ENCODE measurements at regions of chr15 and their contacts with region 1.

Region 1: GRCh38 chr15:75453703-75454470 is 2.4 kb upstream of the SIN3A start:
- DNase-seq: peak; percentile 98
- ATAC-seq: peak; percentile 54
- H3K4me3 ChIP-seq: peak overlapping the region; percentile 76
- H3K27ac ChIP-seq: peak overlapping the region; percentile 96
- H3K4me1 ChIP-seq: peaks cover 11% of the 10 kb centered on the region
- H3K27me3 ChIP-seq: no peaks in the 10 kb centered on the region
- CTCF ChIP-seq: no peak
- EP300 ChIP-seq: no peak
- POLR2A ChIP-seq: peak; percentile 89
- RAD21 ChIP-seq: no peak

Region 2: GRCh38 chr15:75023181-75023871 is 430.6 kb before region 1 on chr15 and contains the start of gene PPCDC:
- CTCF ChIA-PET with region 1: interaction called, 3 read pairs
- POLR2A ChIA-PET with region 1: no interaction called
- RAD21 ChIA-PET with region 1: interaction called, 3 read pairs
- SMC1A ChIA-PET with region 1: no interaction called
- in situ Hi-C with region 1: no loop called
- intact Hi-C with region 1: loop called (anchors 5 kb)
- DNase-seq: peak; percentile 84
- ATAC-seq: peak; percentile 99
- H3K4me3 ChIP-seq: peak within 1 kb of the TSS; percentile 86
- H3K27ac ChIP-seq: peak within 1 kb of the TSS; percentile 98
- H3K4me1 ChIP-seq: peaks cover 16% of the 10 kb centered on the region
- H3K27me3 ChIP-seq: no peaks in the 10 kb centered on the region
- CTCF ChIP-seq: no peak
- EP300 ChIP-seq: no peak
- POLR2A ChIP-seq: peak; percentile 99
- RAD21 ChIP-seq: no peak
- polyA plus RNA-seq, gene PPCDC: 92.0 to 135 TPM

Region 3: GRCh38 chr15:75249726-75250125 is 204.2 kb before region 1 on chr15:
- CTCF ChIA-PET with region 1: no interaction called
- POLR2A ChIA-PET with region 1: no interaction called
- RAD21 ChIA-PET with region 1: no interaction called
- SMC1A ChIA-PET with region 1: no interaction called
- in situ Hi-C with region 1: no loop called
- intact Hi-C with region 1: no loop called
- DNase-seq: no peak
- ATAC-seq: no peak
- H3K4me3 ChIP-seq: no peak overlapping the region
- H3K27ac ChIP-seq: no peak overlapping the region
- H3K4me1 ChIP-seq: no peaks in the 10 kb centered on the region
- H3K27me3 ChIP-seq: no peaks in the 10 kb centered on the region
- CTCF ChIP-seq: no peak
- EP300 ChIP-seq: no peak
- POLR2A ChIP-seq: no peak
- RAD21 ChIP-seq: no peak

Region 4: DNA sequence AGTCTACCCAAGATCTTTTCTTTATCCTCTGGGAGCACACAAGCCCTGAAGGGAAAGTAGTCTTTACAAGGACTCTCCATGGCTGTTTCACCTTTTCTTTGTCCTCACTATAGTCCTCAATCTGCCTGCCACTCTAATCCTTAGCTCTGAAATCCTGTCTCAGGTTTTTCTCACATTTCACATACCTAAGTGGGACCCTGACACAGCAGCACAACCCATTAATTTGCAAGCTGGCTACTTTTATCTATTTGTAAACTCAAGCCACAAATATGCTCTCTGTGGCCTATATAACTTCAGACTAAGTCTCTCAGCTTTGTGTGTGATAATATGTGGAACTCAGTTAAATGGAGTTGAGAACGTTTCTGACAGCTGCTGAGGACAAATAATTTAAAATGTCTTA is 22.2 kb before region 1 on chr15:
- CTCF ChIA-PET with region 1: interaction called, 6 read pairs
- POLR2A ChIA-PET with region 1: interaction called, 4 read pairs
- RAD21 ChIA-PET with region 1: interaction called, 10 read pairs
- SMC1A ChIA-PET with region 1: no interaction called
- in situ Hi-C with region 1: no loop called
- intact Hi-C with region 1: no loop called
- DNase-seq: no peak
- ATAC-seq: no peak
- H3K4me3 ChIP-seq: no peak overlapping the region
- H3K27ac ChIP-seq: no peak overlapping the region
- H3K4me1 ChIP-seq: no peaks in the 10 kb centered on the region
- H3K27me3 ChIP-seq: no peaks in the 10 kb centered on the region
- CTCF ChIP-seq: no peak
- EP300 ChIP-seq: no peak
- POLR2A ChIP-seq: no peak
- RAD21 ChIP-seq: no peak

Region 5: GRCh38 chr15:75578948-75579920 is 125.3 kb after region 1 on chr15 and contains the start of gene PTPN9:
- CTCF ChIA-PET with region 1: interaction called, 4 read pairs
- POLR2A ChIA-PET with region 1: interaction called, 41 read pairs
- RAD21 ChIA-PET with region 1: interaction called, 10 read pairs
- SMC1A ChIA-PET with region 1: interaction called, 5 read pairs
- in situ Hi-C with region 1: no loop called
- intact Hi-C with region 1: no loop called
- DNase-seq: no peak
- ATAC-seq: peak; percentile 84
- H3K4me3 ChIP-seq: peak within 1 kb of the TSS; percentile 86
- H3K27ac ChIP-seq: peak within 1 kb of the TSS; percentile 79
- H3K4me1 ChIP-seq: peaks cover 3% of the 10 kb centered on the region; the same call in 1 of the 2 replicates
- H3K27me3 ChIP-seq: no peaks in the 10 kb centered on the region
- CTCF ChIP-seq: peak; percentile 23 to 46 (median 33); a peak in 5 of 6 replicates
- EP300 ChIP-seq: no peak
- POLR2A ChIP-seq: peak; percentile 76
- RAD21 ChIP-seq: no peak
- polyA plus RNA-seq, gene PTPN9: 7.8 to 8.9 TPM

Region 6: GRCh38 chr15:75625542-75626347 is 171.9 kb after region 1 on chr15 and contains the start of gene SNUPN:
- CTCF ChIA-PET with region 1: interaction called, 10 read pairs
- POLR2A ChIA-PET with region 1: interaction called, 31 read pairs
- RAD21 ChIA-PET with region 1: interaction called, 31 read pairs
- SMC1A ChIA-PET with region 1: interaction called, 12 read pairs
- in situ Hi-C with region 1: loop called (anchors 5 kb)
- intact Hi-C with region 1: loop called (anchors 2 kb)
- DNase-seq: peak; percentile 87
- ATAC-seq: peak; percentile 91
- H3K4me3 ChIP-seq: peak within 1 kb of the TSS; percentile 81
- H3K27ac ChIP-seq: peak within 1 kb of the TSS; percentile 98
- H3K4me1 ChIP-seq: peaks cover 6% of the 10 kb centered on the region
- H3K27me3 ChIP-seq: no peaks in the 10 kb centered on the region
- CTCF ChIP-seq: no peak
- EP300 ChIP-seq: 0 out of 4 replicates have a peak, but pooled peaks of 1 of the 2 experiments have one; percentile 37
- POLR2A ChIP-seq: peak; percentile 87
- RAD21 ChIP-seq: no peak
- polyA plus RNA-seq, gene SNUPN: 47.3 to 50.3 TPM

Region 7: GRCh38 chr15:75639709-75640482 is 186.0 kb after region 1 on chr15 and contains the start of gene IMP3:
- CTCF ChIA-PET with region 1: interaction called, 42 read pairs
- POLR2A ChIA-PET with region 1: interaction called, 110 read pairs
- RAD21 ChIA-PET with region 1: interaction called, 69 read pairs
- SMC1A ChIA-PET with region 1: interaction called, 27 read pairs
- in situ Hi-C with region 1: no loop called
- intact Hi-C with region 1: loop called (anchors 2 kb)
- DNase-seq: peak; percentile 95
- ATAC-seq: peak; percentile 95
- H3K4me3 ChIP-seq: peak within 1 kb of the TSS; percentile 76
- H3K27ac ChIP-seq: peak within 1 kb of the TSS; percentile 75
- H3K4me1 ChIP-seq: no peaks in the 10 kb centered on the region
- H3K27me3 ChIP-seq: no peaks in the 10 kb centered on the region
- CTCF ChIP-seq: no peak
- EP300 ChIP-seq: peak in 1 of 2 experiments; percentile 19; a peak in 1 of 4 replicates
- POLR2A ChIP-seq: peak; percentile 99
- RAD21 ChIP-seq: no peak
- polyA plus RNA-seq, gene IMP3: 13.3 to 34.9 TPM

Region 8: DNA sequence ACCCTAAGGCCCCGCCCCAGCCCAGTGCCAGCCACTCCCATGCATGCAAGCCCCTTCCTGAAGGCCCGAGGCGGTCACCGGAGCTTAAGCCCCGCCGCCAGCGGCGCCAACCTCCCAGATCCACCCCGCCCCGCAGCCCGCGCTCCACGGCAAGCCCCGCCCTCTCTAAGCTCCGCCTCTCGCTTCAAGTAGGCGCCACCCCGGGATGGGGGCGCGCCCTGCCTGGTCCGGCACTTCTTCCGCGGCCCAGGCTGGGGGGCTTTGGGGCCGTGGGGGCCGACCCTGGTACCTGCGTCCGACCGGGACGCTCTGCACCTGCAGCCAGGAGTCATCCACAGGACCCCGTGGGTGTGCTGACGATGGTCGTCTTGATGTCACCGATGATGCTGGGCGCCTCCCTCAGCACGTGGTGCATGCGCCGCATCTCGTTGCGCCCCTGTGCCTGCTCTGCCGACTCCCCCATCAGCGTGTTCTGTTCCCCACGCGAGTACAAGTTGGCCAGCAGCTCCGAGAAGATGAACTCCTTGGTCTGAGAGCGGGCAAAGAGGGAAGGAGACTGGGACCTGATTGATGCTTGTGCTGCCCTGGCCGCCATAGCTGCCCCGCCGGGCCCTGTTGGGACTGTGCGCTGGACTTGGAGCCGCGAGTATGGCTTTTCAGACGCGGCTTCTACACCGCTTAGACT is 284.9 kb after region 1 on chr15:
- CTCF ChIA-PET with region 1: no interaction called
- POLR2A ChIA-PET with region 1: no interaction called
- RAD21 ChIA-PET with region 1: interaction called, 7 read pairs
- SMC1A ChIA-PET with region 1: no interaction called
- in situ Hi-C with region 1: no loop called
- intact Hi-C with region 1: loop called (anchors 5 kb)
- DNase-seq: peak; percentile 53
- ATAC-seq: peak; percentile 99
- H3K4me3 ChIP-seq: peak overlapping the region; percentile 97
- H3K27ac ChIP-seq: no peak overlapping the region
- H3K4me1 ChIP-seq: peaks cover 5% of the 10 kb centered on the region; the same call in 1 of the 2 replicates
- H3K27me3 ChIP-seq: no peaks in the 10 kb centered on the region
- CTCF ChIP-seq: no peak
- EP300 ChIP-seq: no peak
- POLR2A ChIP-seq: peak; percentile 54; the same call in 1 of the 2 replicates
- RAD21 ChIP-seq: no peak